OCI-LY7 (cell line): ENCODE measurements at regions of chr2 and their contacts with region 1.

Region 1: DNA sequence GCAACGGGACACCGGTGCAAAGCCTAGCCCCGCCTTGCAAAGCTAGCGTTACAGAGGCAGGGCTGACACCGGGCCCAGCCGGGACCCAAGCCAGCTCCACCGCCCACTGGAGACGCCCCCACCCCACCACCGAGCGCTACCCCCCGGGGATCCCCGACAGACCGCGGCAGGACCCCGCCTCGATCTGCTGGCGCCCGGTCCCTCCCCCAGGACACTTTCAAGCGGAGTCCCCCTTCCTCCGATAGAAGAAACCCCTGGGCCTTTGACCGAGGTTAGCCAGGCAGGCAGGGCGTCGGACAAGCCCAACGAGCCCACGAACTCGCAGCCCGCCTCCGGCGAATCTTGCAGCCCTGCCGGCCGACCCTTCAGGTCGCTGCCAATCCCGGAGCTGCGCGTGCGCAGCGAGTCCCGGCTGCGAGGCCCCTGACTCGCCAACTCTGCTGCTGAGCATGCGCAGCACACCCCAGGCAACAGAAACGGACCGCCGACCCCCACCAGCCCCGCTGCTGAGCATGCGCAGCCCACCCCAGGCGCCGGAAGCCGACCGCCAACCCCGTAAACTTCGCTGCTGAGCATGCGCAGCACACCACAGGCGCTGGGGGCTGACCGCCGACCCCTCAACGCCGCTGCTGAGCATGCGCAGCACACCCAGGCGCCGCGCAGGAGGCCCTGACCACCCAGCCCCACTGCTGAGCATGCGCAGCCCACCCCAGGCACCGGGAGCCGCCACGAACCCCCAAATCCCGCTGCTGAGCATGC is 656 bp downstream of the ADI1 start:
- DNase-seq: peak; percentile 97
- H3K4me3 ChIP-seq: peak overlapping the region; percentile 81
- H3K27ac ChIP-seq: peak overlapping the region; percentile 60
- H3K4me1 ChIP-seq: peaks cover 26% of the 10 kb centered on the region
- CTCF ChIP-seq: no peak

Region 2: GRCh38 chr2:3379647-3380534 is 138.8 kb before region 1 on chr2 and contains the start of gene TRAPPC12:
- CTCF ChIA-PET with region 1: no interaction called
- POLR2A ChIA-PET with region 1: no interaction called
- intact Hi-C with region 1: loop called (anchors 5 kb)
- DNase-seq: peak; percentile 95
- H3K4me3 ChIP-seq: peak within 1 kb of the TSS; percentile 96
- H3K27ac ChIP-seq: peak within 1 kb of the TSS; percentile 69
- H3K4me1 ChIP-seq: peaks cover 28% of the 10 kb centered on the region
- CTCF ChIP-seq: peak; percentile 75
- total RNA-seq, gene TRAPPC12: 67.0 and 91.6 TPM in 2 replicates

Region 3: DNA sequence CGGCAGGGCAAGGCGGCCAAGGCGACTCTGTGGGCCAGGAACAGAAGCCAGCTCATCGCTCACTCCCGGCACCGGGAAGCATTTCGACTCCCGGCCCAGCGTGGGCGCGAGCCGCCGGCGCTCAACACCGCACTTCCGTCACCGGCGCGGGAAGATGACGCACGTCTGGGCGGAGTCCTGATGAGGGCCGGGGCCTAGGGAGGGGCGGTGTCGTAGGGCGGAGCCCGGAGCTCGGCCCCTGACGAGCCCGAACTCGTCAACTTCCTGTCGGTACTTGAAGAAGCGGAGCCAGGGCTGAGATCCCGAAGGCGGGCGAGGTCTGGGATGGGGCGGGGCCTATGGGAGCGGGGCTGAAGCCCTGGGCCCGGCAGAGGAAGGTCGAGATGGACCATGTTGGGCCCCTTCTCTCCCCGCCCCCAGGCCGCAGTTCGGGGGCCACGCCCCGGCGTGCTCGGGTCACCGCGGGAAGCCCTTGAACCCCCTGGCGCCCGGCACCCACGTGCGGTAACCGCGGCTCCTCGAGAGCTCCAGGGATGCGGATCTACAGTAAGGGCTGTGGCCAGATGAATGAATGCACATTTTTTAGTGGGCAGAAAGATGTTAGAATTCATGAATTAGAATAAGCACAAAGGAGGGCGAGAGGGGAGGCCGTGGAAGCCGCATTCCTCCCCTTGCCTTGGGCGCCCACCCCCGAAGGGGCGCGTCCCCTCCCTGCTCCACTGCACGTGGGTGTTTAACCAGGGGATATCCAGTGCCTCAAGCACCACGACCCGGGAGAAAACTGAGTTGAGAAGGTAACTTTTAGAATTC is 39.7 kb after region 1 on chr2 and contains the start of gene RNASEH1:
- CTCF ChIA-PET with region 1: no interaction called
- POLR2A ChIA-PET with region 1: interaction called, 18 read pairs
- intact Hi-C with region 1: loop called (anchors 1 kb)
- DNase-seq: peak; percentile 98
- H3K4me3 ChIP-seq: peak within 1 kb of the TSS; percentile 80
- H3K27ac ChIP-seq: peak within 1 kb of the TSS; percentile 99
- H3K4me1 ChIP-seq: peaks cover 44% of the 10 kb centered on the region
- CTCF ChIP-seq: no peak
- total RNA-seq, gene RNASEH1: 34.7 and 35.7 TPM in 2 replicates

Region 4: DNA sequence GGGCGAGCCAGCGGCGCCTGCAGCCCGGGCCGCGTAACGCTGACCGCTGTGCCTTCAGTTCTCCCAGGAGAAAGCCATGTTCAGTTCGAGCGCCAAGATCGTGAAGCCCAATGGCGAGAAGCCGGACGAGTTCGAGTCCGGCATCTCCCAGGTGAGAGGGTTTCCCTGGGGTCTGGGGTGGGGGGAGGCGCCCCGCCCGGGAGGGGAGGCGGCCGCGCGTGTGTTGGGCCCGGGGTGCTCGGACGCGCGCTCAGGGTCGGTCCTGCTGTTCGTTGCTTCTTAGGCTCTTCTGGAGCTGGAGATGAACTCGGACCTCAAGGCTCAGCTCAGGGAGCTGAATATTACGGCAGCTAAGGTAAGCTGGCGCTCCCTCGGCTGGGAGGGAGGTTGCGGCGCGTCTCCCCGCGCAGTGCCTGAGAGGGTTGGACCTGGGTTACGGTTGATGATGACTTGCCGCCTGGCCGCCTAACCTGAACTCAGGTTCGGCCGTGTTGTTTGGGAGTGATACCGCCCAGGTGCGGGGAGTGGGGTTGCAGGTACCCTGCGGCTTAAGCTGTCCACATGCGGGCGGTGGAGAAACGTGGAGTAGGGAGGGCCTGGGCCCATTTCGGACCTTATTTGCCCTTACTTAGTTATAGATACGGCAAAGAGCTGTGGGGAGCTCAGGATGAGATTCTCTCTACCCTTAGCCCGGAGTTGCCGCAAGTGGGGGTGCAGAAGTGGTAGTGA is 57.0 kb after region 1 on chr2:
- CTCF ChIA-PET with region 1: no interaction called
- POLR2A ChIA-PET with region 1: no interaction called
- intact Hi-C with region 1: loop called (anchors 2 kb)
- DNase-seq: peak; percentile 42
- H3K4me3 ChIP-seq: peak overlapping the region; percentile 82
- H3K27ac ChIP-seq: peak overlapping the region; percentile 66
- H3K4me1 ChIP-seq: peaks cover 49% of the 10 kb centered on the region
- CTCF ChIP-seq: no peak

Region 5: GRCh38 chr2:3608373-3609278 is 90.0 kb after region 1 on chr2:
- CTCF ChIA-PET with region 1: interaction called, 4 read pairs
- POLR2A ChIA-PET with region 1: interaction called, 19 read pairs
- intact Hi-C with region 1: no loop called
- DNase-seq: peak; percentile 29
- H3K4me3 ChIP-seq: peak overlapping the region; percentile 45
- H3K27ac ChIP-seq: peak overlapping the region; percentile 82
- H3K4me1 ChIP-seq: peaks cover 52% of the 10 kb centered on the region
- CTCF ChIP-seq: no peak